Sigmoid colon (tissue), 7 donors: ENCODE measurements at regions of chr12 and their contacts with region 1.

Region 1: GRCh38 chr12:88471331-88472045 is 108.8 kb downstream of the KITLG start:
- DNase-seq: peak; percentile 64
- H3K4me3 ChIP-seq: no peak overlapping the region
- H3K27ac ChIP-seq: peak overlapping the region; percentile 18 to 43 (median 37)
- H3K4me1 ChIP-seq: peaks cover 0 to 26% (median 20%) of the 10 kb centered on the region in 4 donors
- H3K27me3 ChIP-seq: no peaks in the 10 kb centered on the region
- CTCF ChIP-seq: no peak
- EP300 ChIP-seq: no peak
- POLR2A ChIP-seq: no peak

Region 2: DNA sequence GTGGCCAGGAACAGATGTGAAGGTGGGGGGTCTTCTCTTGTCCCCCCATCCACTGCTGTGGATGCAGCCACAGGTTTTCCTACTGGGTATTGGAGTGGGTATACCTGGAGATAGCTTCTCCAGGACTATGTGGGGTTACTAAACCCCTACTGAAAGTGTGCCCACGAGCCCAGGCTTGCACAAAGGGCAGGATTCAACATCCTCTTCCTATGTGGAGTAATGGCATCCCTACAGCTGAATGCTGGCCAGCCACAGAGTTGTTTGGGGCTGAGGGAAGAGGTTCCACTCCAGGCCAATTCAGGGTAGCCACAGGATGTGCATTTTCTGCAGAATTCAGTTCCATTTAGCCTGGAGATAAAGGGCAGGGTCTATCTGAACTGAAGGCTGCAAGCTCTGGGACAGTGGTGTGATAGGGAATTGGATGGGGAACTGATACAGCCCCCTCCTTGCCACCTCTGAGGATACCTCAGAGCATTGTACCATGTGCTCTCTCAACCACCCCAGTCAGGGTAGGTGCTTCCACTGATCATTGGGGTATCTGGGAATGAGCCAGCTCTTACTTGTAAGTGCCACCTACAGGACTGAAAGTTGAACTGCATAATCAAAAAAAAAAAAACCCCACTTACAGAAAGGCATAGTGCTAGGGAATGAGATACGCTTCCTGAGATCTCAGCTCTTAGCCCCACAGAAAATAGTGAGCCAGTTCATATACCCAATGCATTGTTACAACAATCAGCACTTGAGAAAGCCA is 78.3 kb before region 1 on chr12:
- intact Hi-C with region 1: loop called (anchors 10 kb)
- DNase-seq: no peak
- H3K4me3 ChIP-seq: no peak overlapping the region
- H3K27ac ChIP-seq: no peak overlapping the region
- H3K4me1 ChIP-seq: peaks cover 0 to 23% (median 8%) of the 10 kb centered on the region in 4 donors
- H3K27me3 ChIP-seq: no peaks in the 10 kb centered on the region
- CTCF ChIP-seq: no peak
- EP300 ChIP-seq: no peak
- POLR2A ChIP-seq: no peak